SK-N-SH (cell line): ENCODE measurements at regions of chr1 and their contacts with region 1.

Region 1: GRCh38 chr1:204791453-204792353 is 79.0 kb upstream of the NFASC start:
- DNase-seq: peak; percentile 75
- H3K4me3 ChIP-seq: peak overlapping the region in 1 of 2 experiments; percentile 42; a peak in 1 of 4 replicates
- H3K27ac ChIP-seq: no peak overlapping the region
- H3K4me1 ChIP-seq: peaks cover 0 to 5% of the 10 kb centered on the region in 2 experiments; a peak in 2 of 4 replicates
- H3K27me3 ChIP-seq: peaks cover 26% of the 10 kb centered on the region; the same call in 1 of the 2 replicates
- CTCF ChIP-seq: peak; percentile 85
- EP300 ChIP-seq: no peak
- RAD21 ChIP-seq: peak; percentile 25; the same call in 1 of the 2 replicates

Region 2: DNA sequence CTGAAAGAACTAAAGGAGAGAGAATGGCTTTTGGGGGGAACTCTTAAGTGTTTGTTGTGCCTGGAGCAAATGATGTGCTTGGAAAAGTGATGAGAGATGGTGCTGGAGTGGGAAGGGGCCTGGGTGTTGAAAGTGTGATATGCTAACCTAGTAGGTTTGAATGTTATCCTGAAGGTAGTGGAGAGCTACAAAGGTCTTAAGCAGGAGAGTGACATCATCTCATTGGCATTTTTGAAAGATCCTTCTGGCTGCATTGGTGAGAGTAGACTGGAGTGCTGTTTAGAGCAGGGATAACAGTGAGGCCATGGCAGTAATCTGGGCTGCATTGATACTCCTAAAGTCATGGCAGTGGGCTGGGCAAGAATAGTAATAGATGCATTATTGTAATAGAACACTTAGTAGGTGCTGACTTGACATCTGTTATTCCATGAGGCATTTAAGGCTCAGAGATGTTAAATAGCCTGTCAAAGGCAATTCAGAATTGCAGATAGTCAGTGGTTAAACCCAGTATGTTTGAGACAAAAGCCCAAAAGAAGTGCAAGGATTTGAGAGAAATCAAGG is 231.0 kb before region 1 on chr1:
- CTCF ChIA-PET with region 1: interaction called, 130 read pairs
- POLR2A ChIA-PET with region 1: no interaction called
- DNase-seq: no peak
- H3K4me3 ChIP-seq: no peak overlapping the region
- H3K27ac ChIP-seq: no peak overlapping the region
- H3K4me1 ChIP-seq: no peaks in the 10 kb centered on the region; a peak in 1 of 4 replicates
- H3K27me3 ChIP-seq: no peaks in the 10 kb centered on the region
- CTCF ChIP-seq: no peak
- EP300 ChIP-seq: no peak
- RAD21 ChIP-seq: no peak

Region 3: GRCh38 chr1:204746838-204747442 is 44.8 kb before region 1 on chr1:
- CTCF ChIA-PET with region 1: interaction called, 14 read pairs
- POLR2A ChIA-PET with region 1: no interaction called
- DNase-seq: peak; percentile 52
- H3K4me3 ChIP-seq: peak overlapping the region in 1 of 2 experiments; percentile 14; a peak in 1 of 4 replicates
- H3K27ac ChIP-seq: no peak overlapping the region
- H3K4me1 ChIP-seq: peaks cover 0 to 21% of the 10 kb centered on the region in 2 experiments; a peak in 2 of 4 replicates
- H3K27me3 ChIP-seq: peaks cover 22% of the 10 kb centered on the region; the same call in 1 of the 2 replicates
- CTCF ChIP-seq: peak; percentile 86
- EP300 ChIP-seq: no peak
- RAD21 ChIP-seq: peak; percentile 53

Region 4: DNA sequence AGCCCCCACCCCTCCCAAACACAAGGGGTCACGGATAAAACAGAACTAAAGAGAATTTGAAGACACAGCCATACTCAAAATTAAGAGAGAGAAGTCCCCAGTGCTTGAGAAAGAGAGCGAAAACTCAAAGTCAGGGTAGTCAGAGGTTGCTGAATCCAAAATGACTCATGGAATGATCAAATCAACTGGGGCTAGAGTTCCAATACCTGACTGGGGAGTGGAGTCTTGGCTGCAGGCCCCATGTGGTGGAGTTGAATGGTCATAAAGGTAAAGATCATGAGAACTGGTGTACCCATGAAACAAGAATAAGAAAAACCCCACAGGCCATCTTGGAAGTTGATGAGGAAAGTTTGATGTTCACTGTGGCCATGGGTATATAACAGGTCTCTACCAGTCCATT is 21.7 kb before region 1 on chr1:
- CTCF ChIA-PET with region 1: interaction called, 23 read pairs
- POLR2A ChIA-PET with region 1: no interaction called
- DNase-seq: no peak
- H3K4me3 ChIP-seq: no peak overlapping the region
- H3K27ac ChIP-seq: no peak overlapping the region
- H3K4me1 ChIP-seq: no peaks in the 10 kb centered on the region
- H3K27me3 ChIP-seq: peaks cover 23% of the 10 kb centered on the region; the same call in 1 of the 2 replicates
- CTCF ChIP-seq: no peak
- EP300 ChIP-seq: no peak
- RAD21 ChIP-seq: no peak

Region 5: GRCh38 chr1:204819495-204819894 is 27.8 kb after region 1 on chr1:
- CTCF ChIA-PET with region 1: interaction called, 14 read pairs
- POLR2A ChIA-PET with region 1: no interaction called
- DNase-seq: peak; percentile 50
- H3K4me3 ChIP-seq: no peak overlapping the region
- H3K27ac ChIP-seq: no peak overlapping the region
- H3K4me1 ChIP-seq: peaks cover 0 to 17% of the 10 kb centered on the region in 2 experiments; a peak in 2 of 4 replicates
- H3K27me3 ChIP-seq: peaks cover 16% of the 10 kb centered on the region
- CTCF ChIP-seq: no peak
- EP300 ChIP-seq: peak in 1 of 2 experiments; percentile 56; a peak in 1 of 4 replicates
- RAD21 ChIP-seq: peak; percentile 40; the same call in 1 of the 2 replicates

Region 6: DNA sequence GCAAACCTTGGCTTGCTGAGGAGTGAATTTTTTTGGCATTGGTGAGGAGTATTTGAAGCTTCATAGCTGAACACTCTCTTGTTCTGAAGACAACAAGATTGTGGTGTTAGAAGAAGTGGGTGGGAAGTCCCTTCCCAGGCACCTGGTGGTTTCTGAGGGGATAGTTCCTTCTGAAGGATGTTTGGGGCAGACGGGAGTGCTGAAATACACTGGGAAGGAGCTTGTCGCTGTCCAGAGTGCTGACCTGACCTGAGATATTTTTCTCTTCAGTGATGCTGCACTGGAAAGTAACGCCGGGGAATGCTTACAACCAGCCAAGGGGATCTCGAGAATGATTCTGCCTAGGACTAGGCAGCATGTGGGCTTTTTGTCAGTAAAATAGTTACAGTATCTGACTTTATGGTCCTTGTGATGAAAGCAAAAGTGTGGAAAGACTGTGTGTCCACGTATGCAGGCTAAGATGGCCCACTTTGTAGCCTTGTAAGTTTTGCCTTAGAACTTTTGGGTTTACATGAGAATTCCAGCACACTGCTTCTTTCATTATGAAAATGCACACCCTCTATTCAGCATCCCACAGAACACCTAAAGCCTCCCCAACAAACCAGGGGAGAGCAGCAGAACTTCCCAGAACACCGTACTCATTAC is 45.9 kb after region 1 on chr1:
- CTCF ChIA-PET with region 1: no interaction called
- POLR2A ChIA-PET with region 1: no interaction called
- DNase-seq: no peak
- H3K4me3 ChIP-seq: no peak overlapping the region
- H3K27ac ChIP-seq: no peak overlapping the region
- H3K4me1 ChIP-seq: no peaks in the 10 kb centered on the region; a peak in 1 of 4 replicates
- H3K27me3 ChIP-seq: no peaks in the 10 kb centered on the region
- CTCF ChIP-seq: no peak
- EP300 ChIP-seq: no peak
- RAD21 ChIP-seq: no peak